ENCODE measurements at regions of chr22 and their contacts with region 1.

Region 1: GRCh38 chr22:19432133-19432851 is at the start of gene MRPL40:
- DNase-seq: peak; percentile 96
- H3K4me3 ChIP-seq: peak within 1 kb of the TSS; percentile 82 to 98 (median 92)
- H3K27ac ChIP-seq: peak within 1 kb of the TSS; percentile 92 to 99 (median 98)
- H3K4me1 ChIP-seq: peaks cover 30 to 45% (median 38%) of the 10 kb centered on the region in 4 donors
- H3K27me3 ChIP-seq: no peaks in the 10 kb centered on the region
- CTCF ChIP-seq: peak in 2 of 3 experiments; percentile 8 to 33
- EP300 ChIP-seq: no peak
- POLR2A ChIP-seq: peak; percentile 60
- total RNA-seq, gene MRPL40: 21.2 to 31.2 (median 27.7) TPM

Region 2: GRCh38 chr22:19473578-19473977 is 41.3 kb after region 1 on chr22:
- intact Hi-C with region 1: loop called (anchors 5 kb)
- DNase-seq: no peak
- H3K4me3 ChIP-seq: no peak overlapping the region
- H3K27ac ChIP-seq: no peak overlapping the region
- H3K4me1 ChIP-seq: peaks cover 12 to 49% (median 44%) of the 10 kb centered on the region in 4 donors
- H3K27me3 ChIP-seq: no peaks in the 10 kb centered on the region
- CTCF ChIP-seq: no peak
- EP300 ChIP-seq: no peak
- POLR2A ChIP-seq: no peak